ENCODE measurements at regions of chr18 and their contacts with region 1.

Region 1: GRCh38 chr18:26405190-26405801 is 143.1 kb downstream of the KCTD1 start:
- DNase-seq: no peak
- ATAC-seq: peak; percentile 86

Region 2: DNA sequence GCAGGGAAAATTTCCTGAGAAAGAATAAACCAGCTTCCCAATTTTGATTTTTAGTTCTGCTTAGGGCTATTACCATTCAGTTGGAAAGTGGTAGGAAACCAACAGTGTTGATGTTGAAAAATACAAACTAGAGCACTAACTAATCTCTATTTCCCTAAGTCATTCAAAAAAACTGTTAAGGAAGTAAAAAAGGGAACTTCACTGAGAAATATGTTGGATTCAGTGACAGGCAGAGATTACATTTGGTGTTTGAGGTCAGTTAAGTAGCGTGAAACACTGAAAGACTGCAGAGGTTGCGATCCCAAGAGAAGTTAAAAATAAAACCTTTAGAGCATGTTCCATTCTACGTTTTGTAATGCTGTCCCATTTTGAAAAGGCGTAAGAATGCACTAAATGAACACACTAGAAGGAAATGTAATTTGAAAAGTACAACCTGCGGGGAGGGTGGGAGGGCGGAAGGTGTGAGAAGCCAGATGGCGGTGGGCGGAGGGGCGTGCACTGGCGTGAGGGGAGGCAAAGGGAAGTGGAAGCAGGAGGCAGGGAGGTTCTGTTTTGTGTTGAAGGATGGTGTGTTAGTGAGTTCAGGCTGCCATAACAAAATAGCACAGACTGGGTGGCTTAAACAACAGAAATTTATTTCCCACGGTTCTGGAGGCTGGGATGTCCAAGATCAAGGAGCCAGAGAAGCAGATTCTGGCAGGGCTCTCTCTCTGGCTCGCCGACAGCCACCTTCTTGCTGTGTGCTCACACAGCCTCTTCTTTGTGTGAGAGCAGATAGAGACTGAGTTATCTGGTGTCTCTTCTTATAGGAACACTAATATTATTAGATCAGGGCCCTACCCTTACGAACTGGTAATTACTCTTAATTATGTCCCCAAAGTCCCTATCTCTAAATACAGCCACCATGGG is 237.4 kb after region 1 on chr18:
- intact Hi-C with region 1: loop called (anchors 10 kb)
- DNase-seq: no peak
- ATAC-seq: no peak

Region 3: GRCh38 chr18:26771524-26771923 is 366.2 kb after region 1 on chr18:
- intact Hi-C with region 1: loop called (anchors 5 kb)
- DNase-seq: no peak
- ATAC-seq: no peak

Region 4: GRCh38 chr18:26804519-26804918 is 399.2 kb after region 1 on chr18:
- intact Hi-C with region 1: no loop called
- DNase-seq: no peak
- ATAC-seq: peak; percentile 34